ENCODE measurements at regions of chr4 and their contacts with region 1.

Region 1: DNA sequence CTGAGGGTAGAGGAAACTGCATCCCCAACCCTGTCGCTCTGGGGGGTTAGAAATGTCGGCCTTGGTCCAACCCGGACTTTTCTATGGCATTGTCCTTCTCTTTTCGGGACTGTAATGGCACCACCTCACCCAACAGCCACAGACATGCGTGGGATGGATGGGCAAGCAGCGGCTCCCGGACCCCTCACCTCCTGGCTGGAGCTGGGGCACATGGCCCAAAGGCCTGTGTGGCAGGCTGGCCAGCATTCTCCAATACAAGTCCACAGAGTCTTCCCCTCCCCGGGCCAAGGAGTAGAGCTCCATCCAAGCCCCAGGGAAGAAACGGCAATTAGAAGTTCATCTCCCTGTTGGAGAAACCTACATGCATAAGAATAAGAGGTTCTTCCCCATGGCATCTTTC is 142.9 kb downstream of the NR3C2 start:
- DNase-seq: no peak
- H3K4me3 ChIP-seq: no peak overlapping the region
- H3K27ac ChIP-seq: no peak overlapping the region
- H3K4me1 ChIP-seq: no peaks in the 10 kb centered on the region
- H3K27me3 ChIP-seq: no peaks in the 10 kb centered on the region
- CTCF ChIP-seq: no peak
- EP300 ChIP-seq: no peak
- POLR2A ChIP-seq: no peak

Region 2: DNA sequence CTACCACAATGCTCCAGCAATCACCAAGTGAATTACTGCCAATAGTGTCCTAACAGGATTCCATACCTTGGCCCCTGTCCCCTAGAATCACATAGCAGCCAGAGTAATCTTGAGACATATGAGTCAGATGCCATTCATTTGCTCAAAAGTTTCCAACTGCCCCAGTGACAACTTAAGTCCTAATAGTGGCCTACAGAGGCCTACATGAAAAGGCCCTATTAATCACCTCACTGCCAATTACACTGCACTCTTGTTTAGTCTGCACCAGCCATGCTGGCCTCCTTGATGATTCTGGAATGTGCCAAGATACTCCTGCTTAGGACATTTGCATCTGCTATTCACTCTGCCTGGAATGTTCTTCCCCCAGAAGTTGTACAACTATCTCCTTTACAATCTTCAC is 12.2 kb after region 1 on chr4:
- intact Hi-C with region 1: loop called in 1 of 4 experiments (anchors 1 kb)
- DNase-seq: no peak
- H3K4me3 ChIP-seq: no peak overlapping the region
- H3K27ac ChIP-seq: no peak overlapping the region
- H3K4me1 ChIP-seq: peaks cover 4% of the 10 kb centered on the region
- H3K27me3 ChIP-seq: no peaks in the 10 kb centered on the region
- CTCF ChIP-seq: no peak
- EP300 ChIP-seq: no peak
- POLR2A ChIP-seq: no peak